PC-3 (cell line): ENCODE measurements at regions of chr13 and their contacts with region 1.

Region 1: GRCh38 chr13:49606747-49607648 is 21.3 kb upstream of the ARL11 start:
- DNase-seq: peak; percentile 84
- ATAC-seq: peak; percentile 78
- H3K4me3 ChIP-seq: peak overlapping the region; percentile 50; the same call in 1 of the 2 replicates
- H3K27ac ChIP-seq: no peak overlapping the region
- H3K4me1 ChIP-seq: peaks cover 15% of the 10 kb centered on the region
- H3K27me3 ChIP-seq: no peaks in the 10 kb centered on the region
- CTCF ChIP-seq: peak; percentile 81

Region 2: DNA sequence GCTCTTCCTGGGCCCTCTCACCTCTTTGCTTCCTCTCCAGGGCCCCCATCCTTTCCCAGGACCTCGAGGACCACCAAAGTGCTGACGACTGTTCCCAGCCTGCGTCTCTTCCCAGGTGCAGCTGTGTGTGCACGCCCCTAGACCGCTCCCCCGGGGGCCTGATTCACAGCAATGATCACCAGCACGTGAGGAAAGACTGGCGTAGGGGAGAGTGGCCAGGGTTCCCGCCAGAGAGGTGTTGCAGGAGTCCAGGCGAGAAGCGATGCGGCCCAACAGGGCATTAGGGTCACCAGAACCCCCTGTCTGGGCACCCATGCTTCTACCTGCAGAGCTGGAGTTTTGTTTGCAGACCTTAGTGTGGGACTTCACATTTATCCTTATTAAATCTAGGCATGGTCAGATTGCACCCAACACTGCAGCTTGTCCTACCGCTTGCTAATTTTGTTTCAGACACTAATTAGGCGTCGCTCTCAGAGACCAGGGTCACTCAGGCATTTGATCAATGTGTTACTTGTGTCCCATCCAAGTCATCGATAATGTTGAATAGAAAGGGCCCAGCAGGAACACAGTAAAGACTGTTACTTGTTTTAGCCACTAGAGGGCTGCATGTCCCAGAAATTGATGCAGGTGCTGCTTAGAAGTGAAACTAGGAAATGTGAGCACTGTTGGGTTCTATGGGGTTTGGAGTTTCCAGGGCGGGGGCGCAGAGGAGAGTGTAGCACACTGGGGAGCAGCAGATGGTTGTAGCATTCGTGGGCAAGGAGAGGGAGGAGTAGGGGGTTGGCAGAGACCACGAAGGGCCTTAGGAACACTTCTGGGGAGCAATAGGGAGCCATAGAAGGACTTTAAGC is 306.0 kb before region 1 on chr13:
- CTCF ChIA-PET with region 1: no interaction called
- POLR2A ChIA-PET with region 1: no interaction called
- intact Hi-C with region 1: loop called (anchors 1 kb)
- DNase-seq: peak; percentile 63
- ATAC-seq: peak; percentile 81
- H3K4me3 ChIP-seq: peak overlapping the region; percentile 47; the same call in 1 of the 2 replicates
- H3K27ac ChIP-seq: no peak overlapping the region
- H3K4me1 ChIP-seq: no peaks in the 10 kb centered on the region
- H3K27me3 ChIP-seq: no peaks in the 10 kb centered on the region
- CTCF ChIP-seq: peak; percentile 89

Region 3: GRCh38 chr13:49443704-49444523 is 163.1 kb before region 1 on chr13 and contains the starts of genes CAB39L and SETDB2:
- CTCF ChIA-PET with region 1: no interaction called
- POLR2A ChIA-PET with region 1: interaction called, 3 read pairs
- intact Hi-C with region 1: loop called (anchors 1 kb)
- DNase-seq: peak; percentile 96
- ATAC-seq: peak; percentile 92
- H3K4me3 ChIP-seq: peak within 1 kb of the TSS; percentile 85
- H3K27ac ChIP-seq: peak within 1 kb of the TSS; percentile 79
- H3K4me1 ChIP-seq: peaks cover 47% of the 10 kb centered on the region
- H3K27me3 ChIP-seq: no peaks in the 10 kb centered on the region
- CTCF ChIP-seq: no peak; the same call in 1 of the 2 replicates
- total RNA-seq, gene CAB39L: 1.8 and 2.0 TPM in 2 replicates
- total RNA-seq, gene SETDB2: 2.7 and 3.9 TPM in 2 replicates

Region 4: GRCh38 chr13:49527123-49527522 is 79.9 kb before region 1 on chr13:
- CTCF ChIA-PET with region 1: interaction called, 5 read pairs
- POLR2A ChIA-PET with region 1: no interaction called
- intact Hi-C with region 1: loop called (anchors 10 kb)
- DNase-seq: no peak
- ATAC-seq: no peak
- H3K4me3 ChIP-seq: no peak overlapping the region
- H3K27ac ChIP-seq: no peak overlapping the region
- H3K4me1 ChIP-seq: no peaks in the 10 kb centered on the region
- H3K27me3 ChIP-seq: no peaks in the 10 kb centered on the region
- CTCF ChIP-seq: no peak

Region 5: GRCh38 chr13:49569956-49570689 is 36.9 kb before region 1 on chr13:
- CTCF ChIA-PET with region 1: interaction called, 4 read pairs
- POLR2A ChIA-PET with region 1: no interaction called
- intact Hi-C with region 1: loop called (anchors 1 kb)
- DNase-seq: peak; percentile 87
- ATAC-seq: peak; percentile 98
- H3K4me3 ChIP-seq: no peak overlapping the region
- H3K27ac ChIP-seq: peak overlapping the region; percentile 81
- H3K4me1 ChIP-seq: peaks cover 23% of the 10 kb centered on the region
- H3K27me3 ChIP-seq: no peaks in the 10 kb centered on the region
- CTCF ChIP-seq: no peak